Caco-2 (cell line): ENCODE measurements at regions of chr6 and their contacts with region 1.

Region 1: GRCh38 chr6:162388383-162388777 is 339.2 kb downstream of the PRKN start:
- DNase-seq: no peak
- H3K4me3 ChIP-seq: no peak overlapping the region
- H3K4me3 Mint-ChIP-seq: no peak overlapping the region
- H3K27ac Mint-ChIP-seq: no peak overlapping the region
- H3K4me1 ChIP-seq: no peaks in the 10 kb centered on the region
- H3K4me1 Mint-ChIP-seq: no peaks in the 10 kb centered on the region
- H3K27me3 ChIP-seq: no peaks in the 10 kb centered on the region
- H3K27me3 Mint-ChIP-seq: no peaks in the 10 kb centered on the region
- CTCF ChIP-seq: no peak

Region 2: DNA sequence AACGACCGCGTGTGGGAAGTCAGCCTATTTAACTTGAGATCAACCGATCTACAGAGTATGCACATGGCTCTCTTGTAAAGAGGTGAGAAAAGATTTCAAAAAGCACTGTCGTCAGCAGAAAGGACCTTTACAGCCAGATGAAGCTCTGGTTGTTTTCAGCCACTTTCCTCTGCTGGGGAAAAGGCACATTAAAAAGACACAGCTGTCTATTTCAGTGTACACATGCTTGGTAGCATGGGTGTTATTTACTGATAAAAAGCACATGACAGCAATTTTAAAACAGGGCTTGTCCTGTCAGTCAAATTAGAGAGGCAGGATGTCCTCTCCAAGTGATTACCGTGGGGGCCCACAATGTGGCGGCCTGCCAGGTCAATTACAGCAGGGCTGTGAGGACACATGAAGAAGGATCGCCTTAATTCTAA is 150.3 kb after region 1 on chr6:
- CTCF ChIA-PET with region 1: no interaction called
- POLR2A ChIA-PET with region 1: interaction called, 14 read pairs
- intact Hi-C with region 1: no loop called
- DNase-seq: no peak
- H3K4me3 ChIP-seq: no peak overlapping the region
- H3K4me3 Mint-ChIP-seq: no peak overlapping the region
- H3K27ac Mint-ChIP-seq: no peak overlapping the region
- H3K4me1 ChIP-seq: no peaks in the 10 kb centered on the region
- H3K4me1 Mint-ChIP-seq: no peaks in the 10 kb centered on the region
- H3K27me3 ChIP-seq: no peaks in the 10 kb centered on the region
- H3K27me3 Mint-ChIP-seq: peaks cover 7% of the 10 kb centered on the region
- CTCF ChIP-seq: no peak